ENCODE measurements at regions of chrX and their contacts with region 1.

Region 1: DNA sequence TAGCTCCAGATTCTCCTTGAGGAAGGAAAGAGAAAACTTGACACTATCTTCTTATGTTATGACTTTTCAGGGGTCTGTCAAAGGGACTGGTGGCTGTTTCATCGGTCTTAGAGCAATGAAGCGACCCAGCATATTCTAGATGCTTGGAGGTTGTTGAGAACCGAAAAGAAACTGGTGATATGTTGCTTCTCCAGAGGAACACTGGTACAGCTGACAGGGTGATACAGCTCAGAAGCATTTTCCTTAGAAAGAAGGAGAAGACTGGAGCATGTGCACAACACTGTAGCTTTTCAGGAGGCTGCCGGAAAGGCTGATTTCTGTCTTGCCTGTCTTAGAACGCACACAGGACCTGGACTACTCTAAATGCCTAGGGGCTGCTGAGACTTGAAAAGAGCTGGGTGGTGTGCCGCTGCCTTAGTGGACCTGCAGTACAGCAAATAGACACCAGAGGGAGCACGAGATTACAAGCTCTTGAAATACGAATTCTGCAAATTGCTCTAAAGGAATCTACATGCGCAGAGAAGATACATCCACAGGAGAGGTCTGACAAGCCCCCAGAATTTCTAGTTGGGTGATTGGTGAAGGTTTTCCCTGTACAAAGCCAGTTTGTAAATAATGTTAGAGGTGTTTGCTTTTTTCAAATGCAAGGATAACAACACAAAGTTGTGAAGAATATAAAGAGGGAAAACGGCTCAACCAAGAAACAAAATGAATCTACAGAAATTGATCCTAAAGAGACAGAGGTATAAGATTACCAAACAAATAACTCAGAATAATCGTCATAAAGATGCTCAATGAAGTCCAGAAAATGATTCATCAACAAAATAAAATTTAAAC is 223.1 kb upstream of the DMD start:
- ATAC-seq: peak in 6 of 8 experiments; percentile 31 to 76 (median 36)
- H3K4me3 ChIP-seq: no peak overlapping the region
- H3K27ac ChIP-seq: no peak overlapping the region
- H3K4me1 ChIP-seq: no peaks in the 10 kb centered on the region

Region 2: DNA sequence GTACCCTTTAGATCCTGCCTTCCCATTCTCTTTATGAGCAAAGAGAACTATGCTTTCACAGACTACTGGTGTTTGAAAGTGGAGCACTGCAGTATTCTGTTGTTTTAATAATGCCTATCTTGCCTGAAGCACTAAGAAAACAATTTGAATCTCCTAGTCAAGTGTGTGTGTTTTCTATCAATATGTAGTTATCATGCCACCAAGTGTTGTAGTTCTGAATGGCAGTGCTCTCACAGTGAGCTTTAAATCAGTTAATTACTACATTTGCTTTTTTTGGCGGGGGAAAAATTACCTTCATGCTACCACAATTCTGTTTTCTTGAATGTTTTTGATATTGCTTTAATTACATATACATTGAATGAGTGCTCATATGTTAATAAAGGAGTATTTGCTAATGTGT is 841.2 kb after region 1 on chrX:
- in situ Hi-C with region 1: loop called in 1 of 9 experiments (anchors 25 kb)
- ATAC-seq: no peak
- H3K4me3 ChIP-seq: no peak overlapping the region
- H3K27ac ChIP-seq: no peak overlapping the region
- H3K4me1 ChIP-seq: no peaks in the 10 kb centered on the region

Region 3: GRCh38 chrX:34300871-34301270 is 866.4 kb after region 1 on chrX:
- in situ Hi-C with region 1: loop called in 2 of 9 experiments (anchors 25 kb)
- ATAC-seq: no peak
- H3K4me3 ChIP-seq: no peak overlapping the region
- H3K27ac ChIP-seq: no peak overlapping the region
- H3K4me1 ChIP-seq: no peaks in the 10 kb centered on the region

Measured in motor neuron (in vitro differentiated cells).